ENCODE measurements at regions of chr11 and their contacts with region 1.

Region 1: GRCh38 chr11:59171508-59172322 is at the start of gene DTX4:
- DNase-seq: peak; percentile 94
- ATAC-seq: peak; percentile 89
- H3K4me3 Mint-ChIP-seq: peak within 1 kb of the TSS; percentile 60
- H3K27ac Mint-ChIP-seq: no peak within 1 kb of the TSS
- H3K4me1 Mint-ChIP-seq: peaks cover 9% of the 10 kb centered on the region
- H3K27me3 Mint-ChIP-seq: peaks cover 35% of the 10 kb centered on the region
- total RNA-seq, gene DTX4: 0.12 to 0.28 TPM

Region 2: GRCh38 chr11:59142530-59143507 is 28.9 kb before region 1 on chr11 and contains the start of gene FAM111A:
- CTCF ChIA-PET with region 1: interaction called, 39 read pairs
- DNase-seq: peak; percentile 95
- ATAC-seq: peak; percentile 93
- H3K4me3 Mint-ChIP-seq: peak within 1 kb of the TSS; percentile 96
- H3K27ac Mint-ChIP-seq: peak within 1 kb of the TSS; percentile 97
- H3K4me1 Mint-ChIP-seq: peaks cover 52% of the 10 kb centered on the region
- H3K27me3 Mint-ChIP-seq: no peaks in the 10 kb centered on the region
- total RNA-seq, gene FAM111A: 136 to 152 TPM

Region 3: GRCh38 chr11:59186130-59186594 is 14.4 kb after region 1 on chr11:
- CTCF ChIA-PET with region 1: interaction called, 57 read pairs
- DNase-seq: no peak
- ATAC-seq: peak; percentile 65
- H3K4me3 Mint-ChIP-seq: no peak overlapping the region
- H3K27ac Mint-ChIP-seq: no peak overlapping the region
- H3K4me1 Mint-ChIP-seq: peaks cover 3% of the 10 kb centered on the region
- H3K27me3 Mint-ChIP-seq: peaks cover 3% of the 10 kb centered on the region

Region 4: GRCh38 chr11:59207988-59208451 is 36.3 kb after region 1 on chr11:
- CTCF ChIA-PET with region 1: interaction called, 28 read pairs
- DNase-seq: peak; percentile 42
- ATAC-seq: peak; percentile 57
- H3K4me3 Mint-ChIP-seq: no peak overlapping the region
- H3K27ac Mint-ChIP-seq: no peak overlapping the region
- H3K4me1 Mint-ChIP-seq: peaks cover 8% of the 10 kb centered on the region
- H3K27me3 Mint-ChIP-seq: peaks cover 31% of the 10 kb centered on the region

Region 5: DNA sequence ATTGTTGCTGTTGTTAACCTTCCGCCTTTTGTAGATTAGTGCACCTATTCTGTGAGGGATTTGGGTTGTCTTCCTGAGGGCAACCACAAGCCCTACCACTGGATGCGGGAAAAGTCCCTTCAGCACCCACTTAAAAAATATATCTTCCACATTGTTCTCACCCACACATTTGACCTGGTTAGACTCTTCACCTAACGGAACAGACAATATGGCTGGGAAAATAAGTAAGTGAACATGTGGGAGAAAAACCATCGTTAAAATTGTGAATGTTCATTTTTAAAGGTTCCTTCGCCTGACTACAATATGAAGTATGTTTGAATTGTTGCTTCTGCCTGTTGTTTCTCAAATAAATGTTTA is 113.0 kb after region 1 on chr11:
- CTCF ChIA-PET with region 1: interaction called, 18 read pairs
- DNase-seq: no peak
- ATAC-seq: no peak
- H3K4me3 Mint-ChIP-seq: no peak overlapping the region
- H3K27ac Mint-ChIP-seq: no peak overlapping the region
- H3K4me1 Mint-ChIP-seq: peaks cover 9% of the 10 kb centered on the region
- H3K27me3 Mint-ChIP-seq: peaks cover 23% of the 10 kb centered on the region

Measured in activated CD8-positive, alpha-beta memory T cell treated with anti-CD3 and anti-CD28 coated beads, Interleukin-2, amount 10 ng/mL, durations not matched to agents 7 days and 5 days (primary cell).